ENCODE measurements at regions of chr22 and their contacts with region 1.

Region 1: GRCh38 chr22:34105461-34106062 is 185.3 kb upstream of the LARGE1 start:
- DNase-seq: no peak

Region 2: DNA sequence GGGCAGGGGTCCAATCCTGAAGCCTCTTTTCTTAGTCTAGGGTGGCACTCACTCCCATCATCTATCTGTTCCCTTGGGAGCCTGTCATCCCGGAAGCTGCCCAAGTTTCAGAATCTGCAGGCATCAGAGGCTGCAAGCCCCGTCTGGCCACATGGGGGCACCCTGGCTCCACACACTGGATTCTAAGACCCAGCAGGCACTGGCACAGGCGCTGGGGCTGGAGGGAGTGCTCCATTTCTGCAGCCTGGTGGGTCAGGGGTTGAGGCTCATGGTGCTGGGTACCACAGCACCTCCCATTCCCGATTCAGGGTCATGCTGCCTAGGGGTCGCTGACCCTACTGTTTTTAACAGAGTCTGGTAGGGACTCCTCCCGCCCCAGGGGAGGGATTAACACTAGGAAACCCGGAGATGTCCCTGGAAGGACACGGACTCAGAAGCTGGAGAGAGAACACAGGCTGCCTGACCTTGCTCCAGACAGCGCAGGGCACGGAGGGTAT is 803.5 kb before region 1 on chr22:
- intact Hi-C with region 1: loop called (anchors 2 to 10 kb)
- DNase-seq: peak; percentile 94

Region 3: GRCh38 chr22:33544707-33545106 is 560.9 kb before region 1 on chr22:
- intact Hi-C with region 1: no loop called
- DNase-seq: no peak

Measured in posterior vena cava (tissue), 2 donors.